Breast epithelium (tissue), 4 donors: ENCODE measurements at regions of chr2 and their contacts with region 1.

Region 1: DNA sequence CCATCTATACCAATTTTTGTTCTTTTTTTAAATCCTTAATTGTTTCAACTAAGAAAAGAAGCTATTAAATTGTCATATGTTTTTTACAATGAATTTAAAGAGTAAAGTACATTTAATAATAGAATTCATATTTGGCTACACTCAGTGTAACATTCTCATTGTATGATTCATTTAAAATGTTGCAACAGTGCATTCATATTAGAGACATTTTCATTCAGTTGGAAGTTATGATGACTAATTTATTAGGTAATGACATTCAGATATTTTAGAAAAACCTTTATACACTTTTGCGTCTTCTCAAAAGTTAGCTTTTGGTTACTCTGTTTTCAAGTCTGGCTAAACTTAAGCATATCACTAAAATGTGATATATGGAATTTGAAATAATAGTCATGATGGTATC is 887.5 kb upstream of the NRXN1 start:
- DNase-seq: no peak
- H3K4me3 ChIP-seq: no peak overlapping the region
- H3K27ac ChIP-seq: no peak overlapping the region
- H3K4me1 ChIP-seq: no peaks in the 10 kb centered on the region
- H3K27me3 ChIP-seq: no peaks in the 10 kb centered on the region
- CTCF ChIP-seq: no peak
- POLR2A ChIP-seq: no peak

Region 2: GRCh38 chr2:50181212-50181611 is 1738.2 kb before region 1 on chr2:
- intact Hi-C with region 1: loop called (anchors 10 kb)
- DNase-seq: no peak
- H3K4me3 ChIP-seq: no peak overlapping the region
- H3K27ac ChIP-seq: no peak overlapping the region
- H3K4me1 ChIP-seq: no peaks in the 10 kb centered on the region
- H3K27me3 ChIP-seq: no peaks in the 10 kb centered on the region
- CTCF ChIP-seq: no peak
- POLR2A ChIP-seq: no peak

Region 3: DNA sequence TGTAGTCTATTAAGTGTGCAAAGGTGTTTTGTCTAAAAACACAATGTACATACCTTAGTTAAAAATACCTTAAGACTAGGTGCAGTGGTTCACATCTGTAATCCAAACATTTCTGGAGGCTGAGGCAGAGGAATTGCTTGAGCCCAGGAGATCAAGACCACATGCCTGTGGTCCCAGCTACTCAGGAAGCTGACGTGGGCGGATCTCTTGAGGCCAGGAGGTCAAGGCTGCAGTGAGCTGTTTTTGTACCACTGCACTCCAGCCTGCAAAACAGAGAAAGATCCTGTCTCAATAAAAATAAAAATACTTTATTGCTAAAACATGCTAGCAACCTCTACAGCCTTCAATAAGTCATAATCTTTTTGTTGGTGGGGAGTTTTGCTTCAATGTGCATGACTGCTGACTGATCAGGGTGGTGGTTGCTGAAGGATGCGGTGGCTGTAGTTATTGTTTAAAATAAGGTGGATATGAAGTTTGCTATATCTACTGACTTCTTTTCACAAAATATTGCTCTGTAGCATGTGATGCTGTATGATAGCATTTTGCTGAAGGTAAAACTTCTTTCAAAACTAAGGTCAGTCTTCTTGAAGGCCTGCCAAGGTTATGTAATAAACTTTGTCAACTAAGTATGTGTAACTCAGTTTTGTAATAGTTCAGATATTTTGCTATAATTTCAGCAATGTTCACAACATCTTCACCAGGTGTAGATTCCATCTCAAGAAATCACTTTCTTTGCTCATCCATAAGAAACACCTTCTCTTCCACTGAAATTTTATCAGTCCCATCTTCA is 350.5 kb after region 1 on chr2:
- intact Hi-C with region 1: loop called (anchors 10 kb)
- DNase-seq: no peak
- H3K4me3 ChIP-seq: no peak overlapping the region
- H3K27ac ChIP-seq: no peak overlapping the region
- H3K4me1 ChIP-seq: no peaks in the 10 kb centered on the region
- H3K27me3 ChIP-seq: no peaks in the 10 kb centered on the region
- CTCF ChIP-seq: no peak
- POLR2A ChIP-seq: no peak